RWPE1 (cell line): ENCODE measurements at regions of chr4 and their contacts with region 1.

Region 1: GRCh38 chr4:42519803-42520417 is 122.6 kb downstream of the SHISA3 start:
- DNase-seq: peak; percentile 26
- H3K27ac ChIP-seq: no peak overlapping the region
- CTCF ChIP-seq: peak; percentile 64

Region 2: GRCh38 chr4:42371306-42372252 is 148.3 kb before region 1 on chr4:
- CTCF ChIA-PET with region 1: interaction called, 14 read pairs
- POLR2A ChIA-PET with region 1: no interaction called
- DNase-seq: peak; percentile 20
- H3K27ac ChIP-seq: no peak overlapping the region
- CTCF ChIP-seq: peak; percentile 63

Region 3: GRCh38 chr4:42543762-42544161 is 23.9 kb after region 1 on chr4:
- CTCF ChIA-PET with region 1: no interaction called
- POLR2A ChIA-PET with region 1: no interaction called
- DNase-seq: no peak
- H3K27ac ChIP-seq: no peak overlapping the region
- CTCF ChIP-seq: no peak